Aorta (tissue), 5 donors: ENCODE measurements at regions of chr19 and their contacts with region 1.

Region 1: GRCh38 chr19:46990991-46991676 is 28.5 kb upstream of the NPAS1 start:
- DNase-seq: peak; percentile 87 to 93
- ATAC-seq: peak; percentile 86
- H3K4me3 ChIP-seq: no peak overlapping the region
- H3K27ac ChIP-seq: peak overlapping the region in 1 of 2 donors; percentile 49
- H3K4me1 ChIP-seq: no peaks in the 10 kb centered on the region
- H3K27me3 ChIP-seq: no peaks in the 10 kb centered on the region

Region 2: DNA sequence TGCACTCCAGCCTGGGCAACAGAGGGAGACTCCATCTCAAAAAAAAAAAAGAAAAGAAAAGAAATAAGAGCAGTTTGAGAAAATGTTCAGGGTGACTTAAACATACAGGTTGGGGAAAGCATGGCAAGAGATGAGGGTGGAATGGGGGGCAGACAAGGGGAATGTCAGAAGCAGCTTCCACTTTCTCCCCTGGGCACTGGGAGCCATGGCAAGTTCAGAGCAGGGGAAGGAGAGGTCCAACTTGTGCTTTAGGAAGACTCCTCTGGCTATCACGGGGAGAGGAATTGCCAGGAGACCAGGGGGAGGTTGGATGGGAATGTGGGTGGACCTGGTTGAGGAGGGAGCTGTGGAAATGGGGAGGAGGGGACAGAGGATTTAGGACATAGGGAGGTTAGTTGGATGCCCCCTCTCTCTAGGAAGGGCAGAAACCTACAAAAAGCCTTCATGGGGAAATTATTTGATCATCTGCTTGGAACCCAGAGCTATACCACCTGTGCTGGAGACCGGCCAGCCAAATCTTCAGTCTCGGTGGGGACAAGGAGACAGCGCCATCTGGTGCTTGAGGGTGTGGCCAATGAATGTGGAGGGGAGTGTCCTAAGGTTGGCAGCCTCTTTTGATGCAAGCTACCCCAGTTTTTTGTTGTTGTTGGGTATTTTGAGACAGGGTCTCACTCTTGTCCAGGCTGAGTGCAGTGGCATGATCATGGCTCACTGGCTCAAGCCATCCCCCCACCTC is 237.5 kb before region 1 on chr19:
- intact Hi-C with region 1: loop called (anchors 10 kb)
- DNase-seq: peak in 1 of 2 donors; percentile 69
- ATAC-seq: no peak
- H3K4me3 ChIP-seq: no peak overlapping the region
- H3K27ac ChIP-seq: no peak overlapping the region
- H3K4me1 ChIP-seq: no peaks in the 10 kb centered on the region
- H3K27me3 ChIP-seq: no peaks in the 10 kb centered on the region

Region 3: DNA sequence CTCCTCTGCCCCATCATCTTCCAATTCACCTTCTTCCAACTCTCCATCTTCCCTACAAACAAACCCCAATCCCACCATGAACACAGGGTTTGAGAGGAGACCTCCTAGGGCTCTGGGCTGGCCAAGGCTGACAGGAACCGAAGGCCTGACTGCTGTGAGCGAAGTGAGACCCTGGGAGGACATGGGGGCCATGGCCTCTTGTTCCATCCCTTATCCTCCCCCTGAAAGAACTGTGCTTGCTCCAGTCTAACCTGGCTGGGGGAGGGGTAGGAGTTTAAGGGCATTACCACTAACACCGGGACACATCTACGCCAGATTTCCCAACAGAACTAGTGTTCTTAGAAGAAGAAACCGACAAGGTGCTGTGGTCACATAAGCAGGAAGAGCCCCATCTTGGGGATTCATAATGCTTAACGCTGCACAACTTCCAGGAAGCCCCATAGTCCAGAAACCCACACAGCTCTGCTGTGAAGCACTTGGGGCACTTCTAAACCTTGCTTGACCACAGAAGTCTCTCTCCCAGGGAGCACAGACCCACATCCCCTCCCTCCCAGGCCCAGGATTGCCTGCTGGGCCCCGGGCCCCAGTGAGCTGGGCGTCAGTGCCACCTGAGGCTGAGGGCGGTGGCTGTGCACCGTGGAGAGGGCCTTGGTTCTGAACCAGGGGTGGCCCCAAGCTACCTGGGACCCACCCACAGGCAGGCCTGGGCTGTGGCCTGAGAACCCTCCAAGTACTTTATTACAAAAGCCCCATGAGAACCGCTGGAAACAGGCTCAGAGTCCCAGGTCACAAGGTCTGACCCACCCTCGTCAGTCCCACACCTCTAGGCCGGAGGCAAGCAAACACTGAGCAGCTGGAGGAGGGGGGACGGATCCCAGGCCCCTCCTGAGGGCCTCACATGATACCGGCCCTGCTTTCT is 103.7 kb after region 1 on chr19:
- intact Hi-C with region 1: no loop called
- DNase-seq: no peak
- ATAC-seq: no peak
- H3K4me3 ChIP-seq: no peak overlapping the region
- H3K27ac ChIP-seq: peak overlapping the region in 1 of 2 donors; percentile 13
- H3K4me1 ChIP-seq: no peaks in the 10 kb centered on the region
- H3K27me3 ChIP-seq: no peaks in the 10 kb centered on the region